ENCODE measurements at regions of chr18 and their contacts with region 1.

Region 1: GRCh38 chr18:23629444-23629946 is 33.2 kb downstream of the ANKRD29 start:
- DNase-seq: no peak
- H3K4me3 ChIP-seq: no peak overlapping the region
- H3K27ac ChIP-seq: no peak overlapping the region
- H3K4me1 ChIP-seq: no peaks in the 10 kb centered on the region
- H3K27me3 ChIP-seq: no peaks in the 10 kb centered on the region
- CTCF ChIP-seq: no peak
- POLR2A ChIP-seq: no peak

Region 2: DNA sequence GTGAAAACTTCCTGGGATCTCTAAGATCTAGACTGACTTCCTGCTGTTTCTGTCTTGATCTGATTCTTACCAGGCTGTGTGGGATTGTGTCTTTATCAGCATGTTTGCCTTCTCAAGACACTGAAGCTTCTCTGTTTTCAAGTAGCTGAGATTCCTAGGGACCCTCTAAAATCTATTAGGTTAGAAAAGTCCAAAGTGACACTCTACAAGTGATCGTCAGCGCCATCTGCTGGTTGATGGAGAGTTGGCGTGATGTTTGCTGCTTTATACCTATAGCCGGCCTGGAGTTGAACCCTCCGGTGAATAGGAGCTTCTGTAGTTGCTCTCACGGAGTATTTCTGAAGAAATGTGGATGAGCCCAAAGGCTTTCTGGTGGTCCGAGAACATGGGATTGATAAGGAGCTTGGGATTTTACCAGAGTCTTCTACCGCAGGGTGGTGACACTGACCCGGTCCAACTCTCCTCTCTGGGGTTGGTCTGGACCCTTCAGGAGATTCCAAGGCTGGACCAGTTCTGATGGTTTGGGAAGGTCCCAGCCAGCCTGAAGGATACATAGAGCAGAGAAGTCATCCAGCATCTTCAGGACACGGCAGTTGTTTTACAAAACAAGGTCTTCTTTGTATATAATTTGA is 289.0 kb after region 1 on chr18:
- intact Hi-C with region 1: loop called (anchors 10 kb)
- DNase-seq: peak; percentile 86
- H3K4me3 ChIP-seq: no peak overlapping the region
- H3K27ac ChIP-seq: no peak overlapping the region
- H3K4me1 ChIP-seq: peaks cover 0 to 7% (median 6%) of the 10 kb centered on the region in 6 donors
- H3K27me3 ChIP-seq: no peaks in the 10 kb centered on the region
- CTCF ChIP-seq: peak; percentile 25 to 88 (median 79)
- POLR2A ChIP-seq: no peak

Measured in spleen (tissue), 13 donors.